GM12878 (cell line): ENCODE measurements at regions of chr2 and their contacts with region 1.

Region 1: GRCh38 chr2:230712443-230713330 is at the start of gene CAB39:
- DNase-seq: peak; percentile 63
- ATAC-seq: peak; percentile 87
- H3K4me3 ChIP-seq: peak within 1 kb of the TSS; percentile 100
- H3K27ac ChIP-seq: peak within 1 kb of the TSS; percentile 85
- H3K4me1 ChIP-seq: peaks cover 6% of the 10 kb centered on the region
- H3K27me3 ChIP-seq: no peaks in the 10 kb centered on the region
- CTCF ChIP-seq: peak; percentile 74 to 94 (median 76); a peak in 4 of 6 replicates
- EP300 ChIP-seq: peak; percentile 27 to 29; a peak in 1 of 4 replicates
- POLR2A ChIP-seq: peak; percentile 80
- RAD21 ChIP-seq: peak; percentile 56
- polyA plus RNA-seq, gene CAB39: 37.2 to 42.8 TPM

Region 2: DNA sequence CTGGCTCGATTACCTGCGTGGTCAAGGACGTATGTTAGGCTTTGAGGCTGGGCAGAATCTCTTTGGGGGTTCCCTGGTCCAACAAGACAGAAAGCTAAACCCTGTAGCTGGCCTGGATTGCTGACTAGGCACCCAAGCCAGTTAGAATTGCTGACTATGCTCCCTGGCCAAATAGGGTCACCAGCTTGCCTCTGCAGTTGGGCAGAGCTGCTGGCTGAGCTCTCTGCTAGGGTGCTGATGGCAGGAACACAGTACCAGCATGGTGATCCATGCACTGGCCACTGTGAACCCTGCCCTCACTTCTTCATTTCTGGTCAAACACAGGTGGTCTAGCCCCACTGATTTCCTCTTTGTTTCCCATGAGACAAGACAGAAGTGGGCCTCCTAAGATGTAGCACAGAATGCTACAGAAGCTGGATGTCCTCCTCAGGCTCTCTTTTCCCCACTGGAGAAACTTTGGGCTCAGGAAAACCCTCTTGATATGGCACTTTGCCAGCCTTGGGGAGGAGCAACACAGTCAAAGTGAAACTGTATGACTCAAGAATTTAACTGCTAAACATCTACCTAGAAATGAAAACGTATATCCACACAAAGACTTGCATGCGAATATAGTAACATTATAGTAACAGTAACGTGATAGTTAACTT is 364.9 kb before region 1 on chr2:
- CTCF ChIA-PET with region 1: no interaction called
- POLR2A ChIA-PET with region 1: no interaction called
- RAD21 ChIA-PET with region 1: no interaction called
- SMC1A ChIA-PET with region 1: no interaction called
- in situ Hi-C with region 1: no loop called
- intact Hi-C with region 1: no loop called
- DNase-seq: peak; percentile 32
- ATAC-seq: peak; percentile 87
- H3K4me3 ChIP-seq: no peak overlapping the region
- H3K27ac ChIP-seq: peak overlapping the region; percentile 27; the same call in 1 of the 2 replicates
- H3K4me1 ChIP-seq: peaks cover 15% of the 10 kb centered on the region
- H3K27me3 ChIP-seq: no peaks in the 10 kb centered on the region
- CTCF ChIP-seq: no peak
- EP300 ChIP-seq: no peak
- POLR2A ChIP-seq: no peak
- RAD21 ChIP-seq: no peak

Region 3: GRCh38 chr2:230411570-230412370 is 300.9 kb before region 1 on chr2:
- CTCF ChIA-PET with region 1: no interaction called
- POLR2A ChIA-PET with region 1: no interaction called
- RAD21 ChIA-PET with region 1: interaction called, 3 read pairs
- SMC1A ChIA-PET with region 1: no interaction called
- in situ Hi-C with region 1: no loop called
- intact Hi-C with region 1: loop called (anchors 10 kb)
- DNase-seq: no peak
- ATAC-seq: peak; percentile 77
- H3K4me3 ChIP-seq: peak overlapping the region; percentile 77
- H3K27ac ChIP-seq: peak overlapping the region; percentile 79
- H3K4me1 ChIP-seq: peaks cover 35% of the 10 kb centered on the region
- H3K27me3 ChIP-seq: no peaks in the 10 kb centered on the region
- CTCF ChIP-seq: no peak
- EP300 ChIP-seq: no peak
- POLR2A ChIP-seq: peak; percentile 84
- RAD21 ChIP-seq: no peak

Region 4: DNA sequence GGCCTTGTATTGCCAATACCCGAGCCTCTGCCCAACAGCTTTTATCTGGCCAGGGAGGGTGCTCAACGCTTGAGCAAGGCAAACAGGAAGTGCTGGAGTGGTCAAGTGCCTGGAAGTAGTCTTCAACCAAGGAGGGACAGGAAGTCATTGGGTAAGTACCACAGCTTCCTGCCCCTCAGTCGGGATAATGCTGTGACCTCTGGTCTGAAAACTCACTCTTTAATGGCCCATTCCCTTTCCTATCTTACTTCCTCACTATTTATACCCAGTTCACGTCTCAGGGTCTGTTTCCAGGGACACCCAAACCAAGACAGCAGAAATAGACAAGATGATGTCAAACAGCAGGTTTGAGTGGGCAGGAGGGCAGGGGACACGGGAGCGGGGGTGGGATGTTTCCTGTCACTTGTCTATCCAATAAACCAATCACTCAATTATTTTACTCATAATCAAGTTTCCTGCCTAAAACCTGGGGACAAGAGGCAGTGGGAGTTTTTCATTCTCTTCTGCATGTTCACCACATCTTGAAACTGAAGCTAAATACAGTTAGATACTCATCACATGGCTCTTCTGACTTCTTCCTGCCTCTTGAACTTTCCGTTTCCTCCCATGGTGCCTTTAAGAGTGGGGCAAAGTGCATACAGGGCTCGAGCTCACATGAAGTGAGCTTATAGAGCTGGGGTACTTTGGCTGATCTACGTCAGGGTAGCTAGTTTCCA is 69.0 kb before region 1 on chr2:
- CTCF ChIA-PET with region 1: interaction called, 6 read pairs
- POLR2A ChIA-PET with region 1: interaction called, 11 read pairs
- RAD21 ChIA-PET with region 1: interaction called, 22 read pairs
- SMC1A ChIA-PET with region 1: interaction called, 25 read pairs
- in situ Hi-C with region 1: no loop called
- intact Hi-C with region 1: no loop called
- DNase-seq: no peak
- ATAC-seq: peak; percentile 88
- H3K4me3 ChIP-seq: no peak overlapping the region
- H3K27ac ChIP-seq: peak overlapping the region; percentile 60
- H3K4me1 ChIP-seq: peaks cover 18% of the 10 kb centered on the region
- H3K27me3 ChIP-seq: no peaks in the 10 kb centered on the region
- CTCF ChIP-seq: no peak
- EP300 ChIP-seq: peak in 1 of 2 experiments; percentile 26; a peak in 1 of 4 replicates
- POLR2A ChIP-seq: no peak
- RAD21 ChIP-seq: no peak

Region 5: DNA sequence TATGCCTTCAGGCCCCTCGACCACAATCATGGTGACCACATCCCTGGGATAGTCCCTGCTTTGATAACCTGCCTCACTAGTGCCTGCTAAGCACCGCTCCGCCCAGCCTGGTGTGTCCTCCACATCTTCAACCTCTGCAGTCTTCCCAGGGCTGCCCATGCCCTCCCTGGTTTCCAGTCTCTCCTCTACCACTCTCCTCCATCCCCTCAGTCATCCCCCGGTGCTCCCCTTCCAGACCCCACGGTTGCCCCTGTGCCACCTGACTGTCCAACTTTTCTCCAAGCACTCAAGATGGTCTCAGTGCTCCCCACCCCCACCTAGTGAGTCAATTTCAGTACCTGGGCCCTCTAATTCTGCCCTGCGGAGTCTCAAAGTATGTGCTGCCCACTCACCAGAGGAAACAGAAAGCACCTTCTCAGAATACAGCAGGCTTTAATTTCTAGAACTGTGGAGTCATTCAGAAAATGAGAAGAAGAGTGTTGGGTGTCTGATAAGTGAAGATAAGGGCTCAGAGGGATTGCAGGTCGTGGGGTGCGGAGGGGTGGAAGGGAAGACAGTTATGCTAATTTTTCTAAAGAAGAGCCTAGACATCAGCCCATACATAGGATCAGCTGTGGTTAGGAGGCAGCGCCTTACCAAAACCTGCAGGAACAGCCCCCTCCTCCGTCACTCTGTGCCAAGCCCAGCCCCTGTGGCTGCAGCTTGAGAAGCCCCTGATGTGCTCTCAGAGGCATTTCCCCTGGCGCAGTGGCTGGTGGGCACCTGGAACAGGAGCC is 53.6 kb before region 1 on chr2:
- CTCF ChIA-PET with region 1: interaction called, 9 read pairs
- POLR2A ChIA-PET with region 1: interaction called, 23 read pairs
- RAD21 ChIA-PET with region 1: interaction called, 54 read pairs
- SMC1A ChIA-PET with region 1: interaction called, 27 read pairs
- in situ Hi-C with region 1: no loop called
- intact Hi-C with region 1: loop called (anchors 2 kb)
- DNase-seq: peak; percentile 91
- ATAC-seq: peak; percentile 61
- H3K4me3 ChIP-seq: peak overlapping the region; percentile 62
- H3K27ac ChIP-seq: peak overlapping the region; percentile 91
- H3K4me1 ChIP-seq: peaks cover 67% of the 10 kb centered on the region
- H3K27me3 ChIP-seq: no peaks in the 10 kb centered on the region
- CTCF ChIP-seq: no peak
- EP300 ChIP-seq: peak; percentile 62 to 76
- POLR2A ChIP-seq: no peak; the same call in 1 of the 2 replicates
- RAD21 ChIP-seq: peak; percentile 31; the same call in 1 of the 2 replicates

Region 6: GRCh38 chr2:230684270-230685168 is 28.2 kb before region 1 on chr2:
- CTCF ChIA-PET with region 1: interaction called, 4 read pairs
- POLR2A ChIA-PET with region 1: interaction called, 4 read pairs
- RAD21 ChIA-PET with region 1: interaction called, 10 read pairs
- SMC1A ChIA-PET with region 1: interaction called, 7 read pairs
- in situ Hi-C with region 1: no loop called
- intact Hi-C with region 1: no loop called
- DNase-seq: no peak
- ATAC-seq: no peak
- H3K4me3 ChIP-seq: no peak overlapping the region
- H3K27ac ChIP-seq: no peak overlapping the region
- H3K4me1 ChIP-seq: no peaks in the 10 kb centered on the region
- H3K27me3 ChIP-seq: no peaks in the 10 kb centered on the region
- CTCF ChIP-seq: no peak
- EP300 ChIP-seq: no peak
- POLR2A ChIP-seq: no peak
- RAD21 ChIP-seq: no peak

Region 7: DNA sequence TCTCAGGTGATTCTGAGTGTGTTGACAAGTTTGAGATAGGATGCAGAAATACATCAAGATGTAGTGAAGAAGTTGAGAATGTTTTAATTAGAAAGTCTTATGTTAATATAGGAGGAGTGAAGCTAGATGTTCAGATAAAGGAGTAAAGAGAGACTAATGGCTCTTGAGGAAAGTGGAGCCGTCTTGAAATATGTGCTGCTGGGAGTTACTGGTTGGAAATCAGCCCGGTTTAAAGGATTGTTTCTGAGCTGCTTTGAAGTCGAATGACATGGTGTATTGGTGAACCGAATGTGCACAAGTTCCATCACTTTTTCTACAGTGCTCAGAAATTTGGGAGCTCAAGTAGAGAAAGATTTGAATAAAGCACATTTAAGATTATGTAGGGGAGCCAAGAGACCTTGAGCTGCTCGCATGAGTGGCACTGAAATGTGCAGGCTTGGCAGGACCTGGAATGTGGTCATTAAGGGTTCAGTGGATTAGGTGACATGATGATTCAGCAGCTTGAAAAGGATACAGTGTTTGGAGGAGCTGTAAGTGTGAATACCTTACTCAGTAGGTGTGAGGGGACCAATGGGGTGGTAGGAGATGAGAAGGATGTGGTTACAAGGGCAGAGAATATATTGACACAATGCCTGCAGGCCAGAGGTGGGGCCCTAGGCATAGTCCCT is 68.6 kb after region 1 on chr2:
- CTCF ChIA-PET with region 1: interaction called, 3 read pairs
- POLR2A ChIA-PET with region 1: interaction called, 4 read pairs
- RAD21 ChIA-PET with region 1: interaction called, 7 read pairs
- SMC1A ChIA-PET with region 1: interaction called, 12 read pairs
- in situ Hi-C with region 1: no loop called
- intact Hi-C with region 1: no loop called
- DNase-seq: no peak
- ATAC-seq: peak; percentile 62
- H3K4me3 ChIP-seq: no peak overlapping the region
- H3K27ac ChIP-seq: no peak overlapping the region
- H3K4me1 ChIP-seq: peaks cover 18% of the 10 kb centered on the region
- H3K27me3 ChIP-seq: no peaks in the 10 kb centered on the region
- CTCF ChIP-seq: no peak
- EP300 ChIP-seq: no peak
- POLR2A ChIP-seq: no peak
- RAD21 ChIP-seq: no peak

Region 8: DNA sequence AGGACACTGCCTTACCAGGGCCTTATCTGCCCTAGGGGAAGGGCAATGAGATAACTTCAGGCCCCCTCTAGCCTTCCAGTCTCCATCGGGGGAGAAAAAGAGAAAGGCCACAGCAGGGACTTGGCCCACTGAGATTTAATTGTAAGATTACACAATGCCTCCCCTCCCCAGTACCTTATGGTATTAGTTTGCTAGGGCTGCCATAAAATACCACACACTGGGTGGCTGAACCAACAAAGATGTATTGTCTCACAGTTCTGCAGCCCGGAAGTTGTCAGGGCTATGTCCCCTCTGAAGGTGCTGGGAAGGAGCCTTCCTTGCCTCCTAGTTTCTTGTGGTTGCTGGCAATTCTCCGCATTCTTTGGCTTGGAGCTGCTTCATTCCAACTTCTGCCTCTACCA is 248.4 kb after region 1 on chr2:
- CTCF ChIA-PET with region 1: no interaction called
- POLR2A ChIA-PET with region 1: no interaction called
- RAD21 ChIA-PET with region 1: no interaction called
- SMC1A ChIA-PET with region 1: no interaction called
- in situ Hi-C with region 1: no loop called
- intact Hi-C with region 1: no loop called
- DNase-seq: no peak
- ATAC-seq: no peak
- H3K4me3 ChIP-seq: no peak overlapping the region
- H3K27ac ChIP-seq: no peak overlapping the region
- H3K4me1 ChIP-seq: peaks cover 18% of the 10 kb centered on the region
- H3K27me3 ChIP-seq: no peaks in the 10 kb centered on the region
- CTCF ChIP-seq: no peak
- EP300 ChIP-seq: no peak
- POLR2A ChIP-seq: no peak
- RAD21 ChIP-seq: no peak